MCF 10A (cell line): ENCODE measurements at regions of chr1 and their contacts with region 1.

Region 1: GRCh38 chr1:157948312-157949073 is 45.0 kb upstream of the KIRREL1 start:
- DNase-seq: peak; percentile 65
- H3K4me3 Mint-ChIP-seq: no peak overlapping the region
- H3K27ac Mint-ChIP-seq: no peak overlapping the region
- H3K4me1 Mint-ChIP-seq: no peaks in the 10 kb centered on the region
- H3K27me3 Mint-ChIP-seq: peaks cover 84% of the 10 kb centered on the region
- CTCF ChIP-seq: peak; percentile 88

Region 2: GRCh38 chr1:157580179-157580827 is 368.2 kb before region 1 on chr1:
- CTCF ChIA-PET with region 1: interaction called, 45 read pairs
- POLR2A ChIA-PET with region 1: no interaction called
- intact Hi-C with region 1: loop called (anchors 1 kb)
- DNase-seq: peak; percentile 85
- H3K4me3 Mint-ChIP-seq: no peak overlapping the region
- H3K27ac Mint-ChIP-seq: no peak overlapping the region
- H3K4me1 Mint-ChIP-seq: no peaks in the 10 kb centered on the region
- H3K27me3 Mint-ChIP-seq: peaks cover 62% of the 10 kb centered on the region
- CTCF ChIP-seq: peak; percentile 82

Region 3: GRCh38 chr1:157776971-157777391 is 171.5 kb before region 1 on chr1 and contains the start of gene FCRL2:
- CTCF ChIA-PET with region 1: interaction called, 3 read pairs
- POLR2A ChIA-PET with region 1: no interaction called
- intact Hi-C with region 1: loop called (anchors 5 kb)
- DNase-seq: no peak
- H3K4me3 Mint-ChIP-seq: no peak within 1 kb of the TSS
- H3K27ac Mint-ChIP-seq: no peak within 1 kb of the TSS
- H3K4me1 Mint-ChIP-seq: no peaks in the 10 kb centered on the region
- H3K27me3 Mint-ChIP-seq: peaks cover 38% of the 10 kb centered on the region
- CTCF ChIP-seq: no peak
- total RNA-seq, gene FCRL2: not detected in 2 replicates

Region 4: GRCh38 chr1:157878059-157878458 is 70.4 kb before region 1 on chr1:
- CTCF ChIA-PET with region 1: interaction called, 77 read pairs
- POLR2A ChIA-PET with region 1: no interaction called
- intact Hi-C with region 1: loop called (anchors 1 kb)
- DNase-seq: peak; percentile 74
- H3K4me3 Mint-ChIP-seq: no peak overlapping the region
- H3K27ac Mint-ChIP-seq: no peak overlapping the region
- H3K4me1 Mint-ChIP-seq: no peaks in the 10 kb centered on the region
- H3K27me3 Mint-ChIP-seq: peaks cover 77% of the 10 kb centered on the region
- CTCF ChIP-seq: peak; percentile 57

Region 5: DNA sequence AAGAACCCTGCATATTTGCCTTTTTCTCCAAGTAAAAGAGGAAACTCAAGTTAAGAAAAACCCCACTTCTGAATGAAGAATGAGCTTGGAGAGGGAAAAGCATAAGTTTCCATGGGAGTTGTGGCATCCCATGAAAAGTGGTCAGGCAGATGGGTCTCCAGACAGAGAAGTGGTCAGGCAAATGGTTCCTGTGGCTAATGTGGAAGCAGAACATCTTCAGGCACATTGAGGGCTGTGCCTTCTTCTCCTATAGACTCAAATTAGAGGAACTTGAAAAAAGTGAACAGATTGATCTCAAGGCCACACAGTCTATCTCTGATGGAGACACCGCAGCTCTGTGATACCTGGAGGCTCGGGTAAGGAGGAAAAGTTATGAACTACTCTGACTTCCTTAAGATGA is 10.7 kb before region 1 on chr1:
- CTCF ChIA-PET with region 1: interaction called, 36 read pairs
- POLR2A ChIA-PET with region 1: interaction called, 3 read pairs
- intact Hi-C with region 1: no loop called
- DNase-seq: no peak
- H3K4me3 Mint-ChIP-seq: no peak overlapping the region
- H3K27ac Mint-ChIP-seq: no peak overlapping the region
- H3K4me1 Mint-ChIP-seq: no peaks in the 10 kb centered on the region
- H3K27me3 Mint-ChIP-seq: peaks cover 40% of the 10 kb centered on the region
- CTCF ChIP-seq: no peak